A673 (cell line): ENCODE measurements at regions of chr4 and their contacts with region 1.

Region 1: GRCh38 chr4:181569553-181569952 is 673.6 kb upstream of the TENM3 start:
- DNase-seq: peak; percentile 51
- H3K4me3 ChIP-seq: no peak overlapping the region
- H3K27ac ChIP-seq: no peak overlapping the region
- H3K4me1 ChIP-seq: no peaks in the 10 kb centered on the region
- H3K27me3 ChIP-seq: peaks cover 29% of the 10 kb centered on the region
- CTCF ChIP-seq: peak; percentile 67

Region 2: GRCh38 chr4:182448281-182449151 is 879.0 kb after region 1 on chr4:
- CTCF ChIA-PET with region 1: no interaction called
- POLR2A ChIA-PET with region 1: no interaction called
- intact Hi-C with region 1: loop called (anchors 10 kb)
- DNase-seq: peak; percentile 91
- H3K4me3 ChIP-seq: peak overlapping the region; percentile 62
- H3K27ac ChIP-seq: no peak overlapping the region
- H3K4me1 ChIP-seq: peaks cover 8% of the 10 kb centered on the region
- H3K27me3 ChIP-seq: peaks cover 41% of the 10 kb centered on the region
- CTCF ChIP-seq: no peak